Activated naive CD4-positive, alpha-beta T cell treated with anti-CD3 and anti-CD28 coated beads for 36 hours (primary cell): ENCODE measurements at regions of chr4 and their contacts with region 1.

Region 1: DNA sequence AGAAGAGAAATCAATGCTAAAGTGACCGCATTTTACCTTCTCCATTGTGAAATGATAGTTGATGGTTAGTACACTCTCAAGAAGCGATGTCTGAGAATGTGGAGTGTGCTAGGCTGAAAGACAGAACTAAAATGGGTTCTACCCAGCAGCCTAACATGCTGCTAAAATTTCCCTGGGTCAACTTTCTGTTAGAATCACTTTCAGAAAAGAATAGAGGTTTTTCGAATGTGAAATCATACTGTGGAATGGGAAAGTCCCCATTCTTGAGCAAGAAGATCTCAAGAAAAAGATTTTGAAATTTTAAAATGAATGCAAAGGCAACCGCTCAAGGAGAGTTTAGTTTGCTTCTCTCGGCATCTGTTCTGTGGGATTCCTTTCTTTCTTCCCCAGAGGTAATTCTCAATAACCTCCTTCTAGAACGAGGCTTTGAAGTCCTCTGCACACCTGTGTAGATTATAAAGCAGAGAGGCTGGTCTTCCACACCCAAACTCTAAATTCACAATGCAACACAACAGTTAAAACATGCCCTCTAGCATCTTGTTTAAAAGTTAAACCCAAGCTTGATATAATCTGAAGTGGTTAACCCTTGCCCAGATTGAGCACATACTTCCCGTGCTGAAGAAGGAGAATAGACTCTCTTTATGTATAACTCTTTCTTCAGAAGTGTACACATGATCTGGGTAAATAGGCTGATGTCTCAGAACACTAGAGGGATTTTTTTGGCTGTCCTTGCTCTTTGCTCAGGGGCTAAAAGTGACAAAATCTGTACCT is 208.7 kb upstream of the KLF3 start:
- DNase-seq: peak; percentile 11
- H3K4me3 Mint-ChIP-seq: no peak overlapping the region
- H3K27ac Mint-ChIP-seq: peak overlapping the region; percentile 82
- H3K4me1 Mint-ChIP-seq: peaks cover 52% of the 10 kb centered on the region
- H3K27me3 Mint-ChIP-seq: no peaks in the 10 kb centered on the region

Region 2: DNA sequence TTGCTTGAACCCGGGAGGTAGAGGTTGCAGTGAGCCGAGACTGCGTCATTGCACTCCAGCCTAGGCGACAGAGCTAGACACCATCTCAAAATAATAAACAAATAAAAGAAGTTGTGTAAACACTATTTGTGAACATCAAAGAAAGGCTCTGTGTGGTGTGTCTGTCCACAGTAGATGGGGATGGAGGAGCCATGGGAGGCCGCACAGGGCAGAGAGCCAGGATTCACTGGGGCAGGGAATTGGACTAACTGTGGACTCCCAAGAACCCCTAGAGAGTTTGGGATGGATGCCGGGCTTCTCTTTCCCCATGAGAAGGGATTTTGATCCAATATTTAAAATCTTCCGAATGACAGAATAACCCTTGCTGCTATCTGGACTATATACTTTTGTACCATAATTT is 537.9 kb before region 1 on chr4:
- CTCF ChIA-PET with region 1: no interaction called
- intact Hi-C with region 1: no loop called
- DNase-seq: no peak
- H3K4me3 Mint-ChIP-seq: no peak overlapping the region
- H3K27ac Mint-ChIP-seq: no peak overlapping the region
- H3K4me1 Mint-ChIP-seq: peaks cover 9% of the 10 kb centered on the region
- H3K27me3 Mint-ChIP-seq: no peaks in the 10 kb centered on the region

Region 3: GRCh38 chr4:38328989-38329729 is 126.1 kb before region 1 on chr4:
- CTCF ChIA-PET with region 1: no interaction called
- intact Hi-C with region 1: loop called (anchors 1 kb)
- DNase-seq: peak; percentile 13
- H3K4me3 Mint-ChIP-seq: no peak overlapping the region
- H3K27ac Mint-ChIP-seq: no peak overlapping the region
- H3K4me1 Mint-ChIP-seq: peaks cover 74% of the 10 kb centered on the region
- H3K27me3 Mint-ChIP-seq: no peaks in the 10 kb centered on the region

Region 4: GRCh38 chr4:38514465-38515146 is 59.3 kb after region 1 on chr4:
- CTCF ChIA-PET with region 1: no interaction called
- intact Hi-C with region 1: loop called (anchors 2 kb)
- DNase-seq: peak; percentile 59
- H3K4me3 Mint-ChIP-seq: no peak overlapping the region
- H3K27ac Mint-ChIP-seq: peak overlapping the region; percentile 18
- H3K4me1 Mint-ChIP-seq: peaks cover 73% of the 10 kb centered on the region
- H3K27me3 Mint-ChIP-seq: no peaks in the 10 kb centered on the region

Region 5: GRCh38 chr4:38560768-38561558 is 105.7 kb after region 1 on chr4:
- CTCF ChIA-PET with region 1: no interaction called
- intact Hi-C with region 1: loop called (anchors 1 kb)
- DNase-seq: peak; percentile 60
- H3K4me3 Mint-ChIP-seq: no peak overlapping the region
- H3K27ac Mint-ChIP-seq: no peak overlapping the region
- H3K4me1 Mint-ChIP-seq: peaks cover 16% of the 10 kb centered on the region
- H3K27me3 Mint-ChIP-seq: peaks cover 2% of the 10 kb centered on the region